ENCODE measurements at regions of chr7 and their contacts with region 1.

Region 1: DNA sequence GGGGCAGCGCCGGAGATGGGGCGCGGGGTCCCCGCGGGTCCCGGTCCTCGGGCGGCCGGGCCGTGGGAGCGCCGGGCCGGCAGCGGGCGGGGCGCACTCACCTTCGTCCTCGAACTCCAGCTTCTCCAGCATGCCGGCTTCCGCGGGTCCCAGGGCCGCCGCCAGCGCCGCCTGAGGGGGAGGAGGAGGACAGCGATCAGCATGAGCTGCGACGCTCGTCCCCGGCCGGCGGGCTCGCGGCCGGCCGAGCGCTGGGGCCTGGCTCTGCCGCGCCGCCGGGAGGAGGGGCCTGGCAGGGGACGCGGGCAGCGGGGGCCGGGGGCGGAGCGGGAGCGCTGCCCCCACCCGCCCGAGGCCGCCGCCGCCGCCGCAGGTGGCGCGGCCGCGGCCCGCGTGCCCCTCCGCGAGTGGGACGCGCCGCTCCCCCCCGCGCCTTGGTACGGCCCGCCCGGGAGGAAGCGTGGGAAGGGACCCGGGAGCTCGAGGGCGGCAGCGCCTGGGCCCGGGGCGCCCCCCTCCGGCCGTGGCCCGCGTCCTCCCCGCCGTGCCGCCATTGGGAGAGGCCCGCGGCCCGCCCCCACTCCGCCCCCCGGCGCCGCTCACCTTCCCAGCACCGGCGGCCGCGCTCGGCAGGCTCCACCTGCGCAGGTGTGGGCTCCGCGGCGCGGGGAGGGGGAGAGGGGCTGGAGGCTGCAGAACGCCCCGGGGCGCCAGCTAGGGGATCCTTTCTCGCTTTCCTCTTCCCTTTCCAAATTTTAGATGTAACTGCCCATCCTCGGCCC is 112.5 kb upstream of the RHEB start:
- DNase-seq: peak; percentile 81 to 95 (median 87)
- ATAC-seq: peak; percentile 93
- H3K4me3 ChIP-seq: peak overlapping the region; percentile 80
- H3K4me3 Mint-ChIP-seq: peak overlapping the region; percentile 89 to 99 (median 96)
- H3K27ac ChIP-seq: peak overlapping the region; percentile 81
- H3K27ac Mint-ChIP-seq: peak overlapping the region; percentile 90 to 97 (median 95)
- H3K4me1 ChIP-seq: peaks cover 12% of the 10 kb centered on the region in 2 donors
- H3K4me1 Mint-ChIP-seq: peaks cover 14 to 48% (median 30%) of the 10 kb centered on the region in 7 donors
- H3K27me3 ChIP-seq: no peaks in the 10 kb centered on the region
- H3K27me3 Mint-ChIP-seq: no peaks in the 10 kb centered on the region

Region 2: DNA sequence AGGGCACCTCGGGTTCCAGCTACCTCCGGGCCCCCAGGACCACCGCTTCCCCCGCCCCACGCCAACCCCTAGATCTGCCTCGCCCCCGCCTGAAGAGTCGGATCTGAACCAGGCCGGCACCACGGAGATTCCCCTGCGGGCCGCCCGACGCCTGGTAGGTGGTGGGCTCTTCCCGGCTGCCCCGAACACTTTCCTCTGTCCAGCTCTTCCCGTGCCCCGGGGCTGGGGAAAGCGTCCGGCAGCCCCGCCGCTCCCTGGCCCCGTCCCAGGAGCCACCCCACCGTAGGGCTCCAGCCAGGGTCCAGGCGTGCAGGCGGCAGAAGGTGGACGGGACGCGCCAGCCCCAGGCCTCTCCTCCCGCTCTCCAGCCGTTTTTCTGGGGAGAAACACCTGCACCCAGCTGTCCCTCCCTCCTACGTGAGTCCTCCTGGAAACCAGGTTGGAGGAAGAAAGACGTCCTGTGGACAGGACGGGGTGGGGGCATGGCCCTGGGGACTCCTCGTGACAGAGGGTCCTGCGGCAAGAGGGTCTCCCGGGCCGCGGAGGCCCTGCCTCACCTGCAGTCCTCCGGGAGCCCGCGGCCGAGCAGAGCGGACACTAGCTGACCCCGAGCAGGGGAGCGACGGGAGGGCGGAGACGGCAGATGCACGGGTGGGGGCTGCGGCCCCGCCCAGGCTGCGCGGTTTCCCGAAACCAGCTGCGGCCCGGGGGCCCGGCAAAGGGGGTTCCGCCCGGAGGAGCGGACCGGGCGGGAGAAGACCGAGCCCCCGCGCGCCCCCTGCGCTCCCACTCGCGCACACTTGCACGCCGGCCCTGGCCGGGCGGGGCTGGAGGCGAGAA is 832.2 kb before region 1 on chr7 and contains the start of gene TMEM176B:
- CTCF ChIA-PET with region 1: no interaction called
- POLR2A ChIA-PET with region 1: no interaction called
- intact Hi-C with region 1: no loop called
- DNase-seq: peak in 1 of 9 donors; percentile 9
- ATAC-seq: peak; percentile 50
- H3K4me3 ChIP-seq: no peak within 1 kb of the TSS
- H3K4me3 Mint-ChIP-seq: peak within 1 kb of the TSS; percentile 28 to 82 (median 70)
- H3K27ac ChIP-seq: no peak within 1 kb of the TSS
- H3K27ac Mint-ChIP-seq: peak within 1 kb of the TSS in 2 of 9 donors; percentile 29 to 38
- H3K4me1 ChIP-seq: peaks cover 0 to 15% of the 10 kb centered on the region in 2 donors
- H3K4me1 Mint-ChIP-seq: peaks cover 0 to 19% (median 11%) of the 10 kb centered on the region in 7 donors
- H3K27me3 ChIP-seq: peaks cover 0 to 14% of the 10 kb centered on the region in 2 donors
- H3K27me3 Mint-ChIP-seq: peaks cover 37 to 68% (median 45%) of the 10 kb centered on the region in 5 donors
- total RNA-seq, gene TMEM176B: 2.0 to 7.1 (median 2.8) TPM in 3 of 5 experiments, not detected in the others

Region 3: GRCh38 chr7:151057989-151058780 is 574.0 kb before region 1 on chr7:
- CTCF ChIA-PET with region 1: no interaction called
- POLR2A ChIA-PET with region 1: no interaction called
- intact Hi-C with region 1: loop called (anchors 5 kb)
- DNase-seq: peak; percentile 80 to 99 (median 97)
- ATAC-seq: peak; percentile 96
- H3K4me3 ChIP-seq: peak overlapping the region; percentile 78
- H3K4me3 Mint-ChIP-seq: peak overlapping the region; percentile 91 to 99 (median 94)
- H3K27ac ChIP-seq: peak overlapping the region; percentile 92
- H3K27ac Mint-ChIP-seq: peak overlapping the region; percentile 86 to 96 (median 93)
- H3K4me1 ChIP-seq: peaks cover 25 to 32% of the 10 kb centered on the region in 2 donors
- H3K4me1 Mint-ChIP-seq: peaks cover 25 to 41% (median 38%) of the 10 kb centered on the region in 7 donors
- H3K27me3 ChIP-seq: no peaks in the 10 kb centered on the region
- H3K27me3 Mint-ChIP-seq: no peaks in the 10 kb centered on the region

Region 4: DNA sequence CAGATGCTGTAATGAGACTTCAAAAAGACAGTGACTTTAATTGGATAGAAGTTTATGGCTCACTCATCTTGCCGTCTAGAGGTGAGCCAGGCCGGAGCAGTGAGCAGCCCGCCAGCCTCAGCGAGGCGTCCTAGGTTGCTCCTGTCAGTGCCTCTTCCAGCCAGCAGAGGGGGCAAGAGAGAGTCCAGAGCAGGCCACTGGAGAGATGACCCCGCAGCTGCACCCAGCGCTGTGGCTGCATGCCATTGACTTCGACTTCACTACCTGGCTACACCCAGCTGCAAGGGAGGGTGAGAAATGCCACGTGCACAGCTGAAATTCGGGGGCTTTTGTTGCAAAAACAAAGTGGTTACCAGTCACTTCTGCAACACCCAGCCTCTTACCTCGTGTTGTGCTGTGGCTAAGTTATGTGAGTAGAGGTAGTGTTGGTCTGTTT is 264.0 kb before region 1 on chr7:
- CTCF ChIA-PET with region 1: interaction called, 3 read pairs
- POLR2A ChIA-PET with region 1: no interaction called
- intact Hi-C with region 1: loop called (anchors 2 to 5 kb)
- DNase-seq: peak; percentile 55 to 80 (median 69)
- ATAC-seq: peak; percentile 99
- H3K4me3 ChIP-seq: no peak overlapping the region
- H3K4me3 Mint-ChIP-seq: no peak overlapping the region
- H3K27ac ChIP-seq: no peak overlapping the region
- H3K27ac Mint-ChIP-seq: peak overlapping the region in 2 of 9 donors; percentile 46 to 56
- H3K4me1 ChIP-seq: peaks cover 0 to 4% of the 10 kb centered on the region in 2 donors
- H3K4me1 Mint-ChIP-seq: peaks cover 3 to 29% (median 12%) of the 10 kb centered on the region in 7 donors
- H3K27me3 ChIP-seq: no peaks in the 10 kb centered on the region
- H3K27me3 Mint-ChIP-seq: no peaks in the 10 kb centered on the region

Region 5: GRCh38 chr7:151560243-151560642 is 71.9 kb before region 1 on chr7:
- CTCF ChIA-PET with region 1: no interaction called
- POLR2A ChIA-PET with region 1: no interaction called
- intact Hi-C with region 1: loop called in 1 of 2 experiments (anchors 5 kb)
- DNase-seq: peak in 3 of 9 donors; percentile 11 to 14 (median 13)
- ATAC-seq: no peak
- H3K4me3 ChIP-seq: no peak overlapping the region
- H3K4me3 Mint-ChIP-seq: peak overlapping the region in 9 of 10 donors; percentile 3 to 65 (median 24)
- H3K27ac ChIP-seq: peak overlapping the region; percentile 48
- H3K27ac Mint-ChIP-seq: peak overlapping the region in 8 of 9 donors; percentile 44 to 90 (median 84)
- H3K4me1 ChIP-seq: peaks cover 0 to 6% of the 10 kb centered on the region in 2 donors
- H3K4me1 Mint-ChIP-seq: peaks cover 0 to 23% (median 16%) of the 10 kb centered on the region in 7 donors
- H3K27me3 ChIP-seq: no peaks in the 10 kb centered on the region
- H3K27me3 Mint-ChIP-seq: no peaks in the 10 kb centered on the region

Region 6: GRCh38 chr7:151769188-151769841 is 137.2 kb after region 1 on chr7:
- CTCF ChIA-PET with region 1: no interaction called
- POLR2A ChIA-PET with region 1: interaction called, 4 read pairs
- intact Hi-C with region 1: loop called in 1 of 2 experiments (anchors 1 kb)
- DNase-seq: peak in 7 of 9 donors; percentile 63 to 82 (median 74)
- ATAC-seq: peak; percentile 90
- H3K4me3 ChIP-seq: peak overlapping the region; percentile 52
- H3K4me3 Mint-ChIP-seq: peak overlapping the region; percentile 74 to 88 (median 81)
- H3K27ac ChIP-seq: peak overlapping the region; percentile 81
- H3K27ac Mint-ChIP-seq: peak overlapping the region; percentile 88 to 96 (median 93)
- H3K4me1 ChIP-seq: peaks cover 33 to 43% of the 10 kb centered on the region in 2 donors
- H3K4me1 Mint-ChIP-seq: peaks cover 37 to 86% (median 80%) of the 10 kb centered on the region in 7 donors
- H3K27me3 ChIP-seq: no peaks in the 10 kb centered on the region
- H3K27me3 Mint-ChIP-seq: no peaks in the 10 kb centered on the region

Region 7: GRCh38 chr7:152025077-152025936 is 393.1 kb after region 1 on chr7 and contains the start of gene GALNT11:
- CTCF ChIA-PET with region 1: no interaction called
- POLR2A ChIA-PET with region 1: no interaction called
- intact Hi-C with region 1: loop called (anchors 2 to 5 kb)
- DNase-seq: peak; percentile 82 to 95 (median 91)
- ATAC-seq: peak; percentile 96
- H3K4me3 ChIP-seq: peak within 1 kb of the TSS; percentile 75
- H3K4me3 Mint-ChIP-seq: peak within 1 kb of the TSS; percentile 85 to 92 (median 88)
- H3K27ac ChIP-seq: peak within 1 kb of the TSS; percentile 88
- H3K27ac Mint-ChIP-seq: peak within 1 kb of the TSS; percentile 85 to 96 (median 95)
- H3K4me1 ChIP-seq: peaks cover 7 to 22% of the 10 kb centered on the region in 2 donors
- H3K4me1 Mint-ChIP-seq: peaks cover 12 to 45% (median 39%) of the 10 kb centered on the region in 7 donors
- H3K27me3 ChIP-seq: no peaks in the 10 kb centered on the region
- H3K27me3 Mint-ChIP-seq: peaks cover 0 to 11% (median 0%) of the 10 kb centered on the region in 5 donors
- total RNA-seq, gene GALNT11: 16.0 to 29.5 (median 17.9) TPM